ENCODE measurements at regions of chr19 and their contacts with region 1.

Region 1: GRCh38 chr19:36528194-36528920 is at the start of gene ZNF260:
- DNase-seq: peak; percentile 81 to 94 (median 90)
- ATAC-seq: peak; percentile 95
- H3K4me3 ChIP-seq: peak within 1 kb of the TSS; percentile 91
- H3K4me3 Mint-ChIP-seq: peak within 1 kb of the TSS; percentile 88 to 100 (median 98)
- H3K27ac ChIP-seq: peak within 1 kb of the TSS; percentile 83
- H3K27ac Mint-ChIP-seq: peak within 1 kb of the TSS; percentile 84 to 99 (median 96)
- H3K4me1 ChIP-seq: peaks cover 4 to 11% of the 10 kb centered on the region in 2 donors
- H3K4me1 Mint-ChIP-seq: peaks cover 15 to 31% (median 23%) of the 10 kb centered on the region in 7 donors
- H3K27me3 ChIP-seq: no peaks in the 10 kb centered on the region
- H3K27me3 Mint-ChIP-seq: no peaks in the 10 kb centered on the region
- total RNA-seq, gene ZNF260: 2.9 to 13.2 (median 11.3) TPM

Region 2: DNA sequence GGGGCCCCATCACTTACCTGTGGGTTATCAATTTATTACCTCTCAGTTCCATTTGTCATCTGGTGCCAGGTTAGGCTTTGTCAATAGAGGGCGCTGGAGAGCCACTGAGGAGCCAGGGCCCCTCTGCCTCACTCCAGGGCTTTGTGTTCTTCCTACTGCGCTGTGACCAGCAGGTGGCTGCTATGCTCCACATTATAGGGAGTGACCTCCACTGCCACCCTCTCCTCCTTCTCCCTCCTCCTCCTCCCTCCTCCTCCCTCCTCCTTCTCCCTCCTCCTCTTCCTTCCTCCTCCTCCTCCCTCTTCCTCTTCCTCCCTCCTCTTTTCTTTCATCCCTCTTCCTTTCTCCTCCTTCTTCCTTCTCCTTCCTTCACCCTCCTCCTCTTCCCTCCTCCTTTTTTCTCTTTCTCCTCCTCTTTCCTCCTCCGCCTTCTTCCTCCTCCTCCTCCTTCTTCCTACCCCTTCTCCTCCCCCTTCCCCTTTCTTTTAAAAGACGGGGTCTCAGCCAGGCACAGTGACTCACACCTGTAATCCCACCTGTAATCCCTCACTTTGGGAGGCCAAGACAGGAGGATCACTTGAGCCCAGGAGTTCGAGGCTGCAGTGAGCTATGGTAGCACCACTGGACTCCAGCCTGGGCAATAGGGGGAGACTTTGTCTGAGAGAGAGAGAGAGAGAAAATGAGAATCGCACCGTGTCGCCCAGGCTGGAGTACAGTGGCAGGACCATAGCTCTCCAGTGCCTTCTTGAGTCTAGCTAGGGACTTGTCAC is 834.3 kb before region 1 on chr19:
- CTCF ChIA-PET with region 1: no interaction called
- POLR2A ChIA-PET with region 1: no interaction called
- intact Hi-C with region 1: no loop called
- DNase-seq: peak; percentile 75 to 93 (median 86)
- ATAC-seq: peak; percentile 100
- H3K4me3 ChIP-seq: no peak overlapping the region
- H3K4me3 Mint-ChIP-seq: no peak overlapping the region
- H3K27ac ChIP-seq: no peak overlapping the region
- H3K27ac Mint-ChIP-seq: peak overlapping the region in 4 of 9 donors; percentile 6 to 62 (median 40)
- H3K4me1 ChIP-seq: no peaks in the 10 kb centered on the region
- H3K4me1 Mint-ChIP-seq: peaks cover 0 to 27% (median 0%) of the 10 kb centered on the region in 7 donors
- H3K27me3 ChIP-seq: no peaks in the 10 kb centered on the region
- H3K27me3 Mint-ChIP-seq: no peaks in the 10 kb centered on the region

Region 3: GRCh38 chr19:36418287-36419001 is 109.9 kb before region 1 on chr19 and contains the start of gene ZFP82:
- CTCF ChIA-PET with region 1: no interaction called
- POLR2A ChIA-PET with region 1: no interaction called
- intact Hi-C with region 1: loop called (anchors 1 kb)
- DNase-seq: peak; percentile 47 to 83 (median 76)
- ATAC-seq: peak; percentile 94
- H3K4me3 ChIP-seq: peak within 1 kb of the TSS; percentile 82
- H3K4me3 Mint-ChIP-seq: peak within 1 kb of the TSS; percentile 89 to 96 (median 93)
- H3K27ac ChIP-seq: peak within 1 kb of the TSS; percentile 83
- H3K27ac Mint-ChIP-seq: peak within 1 kb of the TSS; percentile 82 to 95 (median 91)
- H3K4me1 ChIP-seq: peaks cover 6 to 13% of the 10 kb centered on the region in 2 donors
- H3K4me1 Mint-ChIP-seq: peaks cover 10 to 36% (median 21%) of the 10 kb centered on the region in 7 donors
- H3K27me3 ChIP-seq: peaks cover 0 to 9% of the 10 kb centered on the region in 2 donors
- H3K27me3 Mint-ChIP-seq: peaks cover 14 to 23% (median 22%) of the 10 kb centered on the region in 5 donors
- total RNA-seq, gene ZFP82: 2.2 to 8.2 (median 5.7) TPM

Region 4: DNA sequence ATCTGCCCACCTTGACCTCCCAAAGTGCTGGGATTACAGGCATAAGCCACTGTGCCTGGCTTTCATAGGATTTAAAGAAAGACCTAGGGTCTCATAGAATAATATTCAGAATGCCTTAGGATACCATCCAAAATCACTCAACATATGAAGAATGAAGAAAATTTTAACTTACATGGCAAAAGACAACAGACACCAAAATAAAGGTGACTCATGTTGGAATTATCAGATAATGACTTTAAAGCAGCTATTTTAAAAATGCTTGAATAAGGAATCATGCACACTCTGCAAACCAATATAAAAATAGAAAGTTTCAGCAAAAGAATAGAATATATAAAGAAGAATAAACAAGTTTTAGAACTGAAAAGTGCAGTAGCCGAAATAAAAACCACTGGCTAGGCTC is 68.3 kb before region 1 on chr19:
- CTCF ChIA-PET with region 1: no interaction called
- POLR2A ChIA-PET with region 1: no interaction called
- intact Hi-C with region 1: no loop called
- DNase-seq: no peak
- ATAC-seq: no peak
- H3K4me3 ChIP-seq: no peak overlapping the region
- H3K4me3 Mint-ChIP-seq: no peak overlapping the region
- H3K27ac ChIP-seq: no peak overlapping the region
- H3K27ac Mint-ChIP-seq: no peak overlapping the region
- H3K4me1 ChIP-seq: no peaks in the 10 kb centered on the region
- H3K4me1 Mint-ChIP-seq: no peaks in the 10 kb centered on the region
- H3K27me3 ChIP-seq: no peaks in the 10 kb centered on the region
- H3K27me3 Mint-ChIP-seq: no peaks in the 10 kb centered on the region

Region 5: GRCh38 chr19:36605101-36605876 is 76.9 kb after region 1 on chr19 and contains the start of gene ZNF382:
- CTCF ChIA-PET with region 1: no interaction called
- POLR2A ChIA-PET with region 1: interaction called, 10 read pairs
- intact Hi-C with region 1: loop called (anchors 1 kb)
- DNase-seq: peak; percentile 77 to 92 (median 86)
- ATAC-seq: peak; percentile 80
- H3K4me3 ChIP-seq: peak within 1 kb of the TSS; percentile 95
- H3K4me3 Mint-ChIP-seq: peak within 1 kb of the TSS; percentile 81 to 99 (median 93)
- H3K27ac ChIP-seq: peak within 1 kb of the TSS; percentile 84
- H3K27ac Mint-ChIP-seq: peak within 1 kb of the TSS; percentile 78 to 98 (median 93)
- H3K4me1 ChIP-seq: peaks cover 7 to 15% of the 10 kb centered on the region in 2 donors
- H3K4me1 Mint-ChIP-seq: peaks cover 20 to 32% (median 27%) of the 10 kb centered on the region in 7 donors
- H3K27me3 ChIP-seq: no peaks in the 10 kb centered on the region
- H3K27me3 Mint-ChIP-seq: no peaks in the 10 kb centered on the region
- total RNA-seq, gene ZNF382: 5.4 to 20.2 (median 12.2) TPM

Region 6: GRCh38 chr19:36796076-36796992 is 268.0 kb after region 1 on chr19:
- CTCF ChIA-PET with region 1: no interaction called
- POLR2A ChIA-PET with region 1: interaction called, 3 read pairs
- intact Hi-C with region 1: loop called in 1 of 2 experiments (anchors 1 kb)
- DNase-seq: no peak
- ATAC-seq: no peak
- H3K4me3 ChIP-seq: peak overlapping the region; percentile 100
- H3K4me3 Mint-ChIP-seq: peak overlapping the region; percentile 87 to 99 (median 98)
- H3K27ac ChIP-seq: peak overlapping the region; percentile 79
- H3K27ac Mint-ChIP-seq: peak overlapping the region; percentile 87 to 100 (median 98)
- H3K4me1 ChIP-seq: no peaks in the 10 kb centered on the region
- H3K4me1 Mint-ChIP-seq: peaks cover 0 to 28% (median 16%) of the 10 kb centered on the region in 7 donors
- H3K27me3 ChIP-seq: no peaks in the 10 kb centered on the region
- H3K27me3 Mint-ChIP-seq: peaks cover 0 to 10% (median 9%) of the 10 kb centered on the region in 5 donors

Region 7: DNA sequence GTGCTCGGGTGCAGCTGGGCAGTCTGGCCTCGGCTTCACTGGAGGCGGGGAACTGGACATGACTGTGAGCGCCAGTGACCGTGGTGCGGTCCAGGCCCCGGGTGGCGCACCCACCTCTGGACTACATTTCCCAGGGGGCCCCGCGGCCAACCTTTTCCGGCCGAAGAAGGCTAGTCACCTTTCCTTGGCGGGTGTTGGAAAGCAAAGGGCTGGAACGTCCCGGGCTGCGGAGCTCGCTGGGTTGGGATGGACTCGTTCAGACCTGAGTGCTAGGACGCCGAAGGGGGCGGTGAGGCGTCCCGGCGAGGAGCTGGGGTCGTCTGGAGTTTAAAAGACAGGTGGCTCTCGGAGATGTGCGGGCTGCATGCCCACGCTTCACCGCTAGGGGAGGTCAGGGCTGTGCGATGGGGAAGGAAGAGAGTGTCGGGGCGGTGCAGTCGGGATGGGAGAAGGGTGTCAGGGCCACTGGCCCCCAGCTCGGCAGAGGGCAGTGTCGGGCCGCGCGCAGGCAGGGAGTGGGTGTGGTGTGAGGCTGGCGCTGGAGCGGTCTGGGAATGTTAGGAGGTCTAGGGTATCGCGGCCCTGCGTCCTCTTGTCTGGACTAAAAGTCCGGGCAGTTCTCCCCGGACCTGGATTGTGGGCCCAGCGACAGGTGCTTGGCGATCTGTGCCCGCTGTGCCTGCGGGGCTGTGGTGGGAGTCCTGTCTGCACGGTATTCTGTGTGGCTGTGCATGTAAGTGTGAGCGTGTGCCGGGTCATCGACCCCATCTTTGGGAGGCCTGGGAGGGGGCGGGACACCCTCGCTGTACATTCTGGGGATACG is 444.9 kb after region 1 on chr19:
- CTCF ChIA-PET with region 1: no interaction called
- POLR2A ChIA-PET with region 1: no interaction called
- intact Hi-C with region 1: loop called in 1 of 2 experiments (anchors 1 kb)
- DNase-seq: peak; percentile 56 to 84 (median 73)
- ATAC-seq: peak; percentile 96
- H3K4me3 ChIP-seq: peak overlapping the region; percentile 100
- H3K4me3 Mint-ChIP-seq: peak overlapping the region; percentile 92 to 99 (median 97)
- H3K27ac ChIP-seq: peak overlapping the region; percentile 75
- H3K27ac Mint-ChIP-seq: peak overlapping the region; percentile 83 to 97 (median 92)
- H3K4me1 ChIP-seq: peaks cover 5 to 15% of the 10 kb centered on the region in 2 donors
- H3K4me1 Mint-ChIP-seq: peaks cover 9 to 22% (median 13%) of the 10 kb centered on the region in 7 donors
- H3K27me3 ChIP-seq: no peaks in the 10 kb centered on the region
- H3K27me3 Mint-ChIP-seq: no peaks in the 10 kb centered on the region

Region 8: DNA sequence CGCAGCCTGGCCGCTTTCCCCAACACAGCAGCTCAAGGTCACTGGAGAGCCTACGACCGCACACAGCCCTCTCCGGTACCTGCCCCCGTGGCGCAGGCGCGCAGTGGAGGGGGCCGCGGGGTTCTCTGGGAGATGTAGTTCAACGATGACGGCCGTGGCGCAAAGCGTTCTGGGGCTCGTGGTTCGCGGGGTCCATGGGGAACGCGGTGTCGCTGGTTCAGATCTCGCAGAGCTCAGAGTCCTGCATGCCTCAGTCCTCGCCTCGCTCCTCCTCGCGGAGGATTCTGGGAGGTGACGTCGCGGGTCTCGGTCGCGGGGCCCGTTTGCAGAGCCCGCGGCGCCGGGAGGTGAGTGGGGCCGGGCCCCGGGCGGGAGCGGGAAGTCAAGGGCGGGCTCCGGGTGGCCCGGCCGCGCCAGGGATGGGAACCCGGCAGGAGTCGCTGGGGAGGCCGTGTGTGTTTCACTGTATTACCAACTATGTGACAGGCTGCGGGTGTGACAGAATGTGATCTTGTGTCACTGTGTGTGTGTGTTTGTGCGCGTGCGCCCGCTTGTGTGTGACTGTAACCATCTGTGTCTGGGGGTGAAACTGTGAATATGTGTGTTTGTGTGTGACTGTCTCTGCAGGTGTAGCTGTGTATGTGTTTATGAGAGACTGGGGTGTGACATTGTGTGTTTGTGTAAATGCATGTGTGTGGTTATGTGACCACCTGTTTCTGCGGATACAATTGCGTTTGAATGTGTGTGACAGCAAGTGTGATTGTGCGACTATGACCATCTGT is 842.7 kb after region 1 on chr19 and contains the start of gene ZNF527:
- CTCF ChIA-PET with region 1: no interaction called
- POLR2A ChIA-PET with region 1: interaction called, 8 read pairs
- intact Hi-C with region 1: loop called in 1 of 2 experiments (anchors 2 kb)
- DNase-seq: peak; percentile 92 to 97 (median 96)
- ATAC-seq: peak; percentile 96
- H3K4me3 ChIP-seq: peak within 1 kb of the TSS; percentile 85
- H3K4me3 Mint-ChIP-seq: peak within 1 kb of the TSS; percentile 92 to 100 (median 98)
- H3K27ac ChIP-seq: peak within 1 kb of the TSS; percentile 74
- H3K27ac Mint-ChIP-seq: peak within 1 kb of the TSS; percentile 87 to 99 (median 97)
- H3K4me1 ChIP-seq: peaks cover 0 to 8% of the 10 kb centered on the region in 2 donors
- H3K4me1 Mint-ChIP-seq: peaks cover 7 to 25% (median 17%) of the 10 kb centered on the region in 7 donors
- H3K27me3 ChIP-seq: no peaks in the 10 kb centered on the region
- H3K27me3 Mint-ChIP-seq: no peaks in the 10 kb centered on the region
- total RNA-seq, gene ZNF527: 5.6 to 13.6 (median 13.2) TPM

Measured in naive thymus-derived CD4-positive, alpha-beta T cell (primary cell).